OCI-LY7 (cell line): ENCODE measurements at regions of chr4 and their contacts with region 1.

Region 1: DNA sequence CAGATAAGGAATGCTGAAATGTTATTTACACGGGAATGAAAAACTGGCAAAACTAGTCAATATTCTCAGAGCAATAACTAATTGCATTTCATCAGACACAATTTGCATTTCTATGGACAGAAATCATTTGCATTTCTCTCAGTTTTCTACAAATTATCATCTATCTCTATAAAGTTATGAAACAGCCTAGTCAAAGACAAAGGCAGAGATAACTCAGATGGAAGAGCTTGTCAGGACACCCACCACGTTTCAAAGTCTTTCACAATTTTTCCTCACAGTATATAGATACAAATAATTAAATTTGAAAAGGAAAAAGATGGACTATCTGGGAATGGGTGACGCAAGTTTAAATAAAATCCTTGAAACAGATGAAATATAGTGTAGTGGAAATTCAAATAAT is 230.8 kb downstream of the GASK1B start:
- DNase-seq: no peak
- H3K4me3 ChIP-seq: no peak overlapping the region
- H3K27ac ChIP-seq: no peak overlapping the region
- H3K4me1 ChIP-seq: no peaks in the 10 kb centered on the region
- CTCF ChIP-seq: no peak

Region 2: DNA sequence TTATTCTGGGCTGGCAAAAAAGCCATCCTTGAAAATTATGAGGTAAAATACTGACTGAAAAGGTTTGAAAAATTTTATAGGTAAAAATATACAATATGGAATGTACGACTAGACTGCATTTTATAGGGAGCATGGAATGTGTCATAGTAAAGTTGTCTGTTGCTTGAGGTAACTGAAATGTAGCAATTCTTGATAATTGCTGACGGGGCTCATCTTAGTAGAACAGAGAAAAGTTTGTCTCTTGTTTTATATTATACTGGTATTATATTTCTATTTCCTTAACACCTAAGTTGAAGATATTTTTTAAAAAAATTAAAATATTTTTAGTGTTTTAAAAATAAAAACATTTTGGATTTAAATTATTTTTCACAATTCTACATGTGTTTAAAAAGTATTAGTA is 710.5 kb before region 1 on chr4:
- CTCF ChIA-PET with region 1: no interaction called
- POLR2A ChIA-PET with region 1: no interaction called
- intact Hi-C with region 1: loop called (anchors 10 kb)
- DNase-seq: no peak
- H3K4me3 ChIP-seq: no peak overlapping the region
- H3K27ac ChIP-seq: no peak overlapping the region
- H3K4me1 ChIP-seq: no peaks in the 10 kb centered on the region
- CTCF ChIP-seq: no peak

Region 3: GRCh38 chr4:157550048-157550447 is 392.0 kb before region 1 on chr4:
- CTCF ChIA-PET with region 1: no interaction called
- POLR2A ChIA-PET with region 1: no interaction called
- intact Hi-C with region 1: no loop called
- DNase-seq: no peak
- H3K4me3 ChIP-seq: no peak overlapping the region
- H3K27ac ChIP-seq: no peak overlapping the region
- H3K4me1 ChIP-seq: no peaks in the 10 kb centered on the region
- CTCF ChIP-seq: no peak

Region 4: GRCh38 chr4:158112622-158113021 is 170.6 kb after region 1 on chr4:
- CTCF ChIA-PET with region 1: no interaction called
- POLR2A ChIA-PET with region 1: no interaction called
- intact Hi-C with region 1: no loop called
- DNase-seq: no peak
- H3K4me3 ChIP-seq: no peak overlapping the region
- H3K27ac ChIP-seq: no peak overlapping the region
- H3K4me1 ChIP-seq: no peaks in the 10 kb centered on the region
- CTCF ChIP-seq: no peak